ENCODE measurements at regions of chr12 and their contacts with region 1.

Region 1: GRCh38 chr12:120686690-120687577 is at the start of gene MLEC:
- DNase-seq: peak; percentile 98 to 100 (median 99)
- ATAC-seq: peak; percentile 88
- H3K4me3 ChIP-seq: peak within 1 kb of the TSS; percentile 99
- H3K4me3 Mint-ChIP-seq: peak within 1 kb of the TSS; percentile 90 to 95 (median 94)
- H3K27ac ChIP-seq: peak within 1 kb of the TSS; percentile 77
- H3K27ac Mint-ChIP-seq: peak within 1 kb of the TSS; percentile 91 to 97 (median 95)
- H3K4me1 ChIP-seq: peaks cover 12 to 22% of the 10 kb centered on the region in 2 donors
- H3K4me1 Mint-ChIP-seq: peaks cover 22 to 53% (median 41%) of the 10 kb centered on the region in 7 donors
- H3K27me3 ChIP-seq: no peaks in the 10 kb centered on the region
- H3K27me3 Mint-ChIP-seq: peaks cover 0 to 3% (median 0%) of the 10 kb centered on the region in 5 donors
- total RNA-seq, gene MLEC: 27.6 to 132 (median 57.6) TPM

Region 2: GRCh38 chr12:120116792-120117651 is 569.9 kb before region 1 on chr12:
- CTCF ChIA-PET with region 1: no interaction called
- POLR2A ChIA-PET with region 1: no interaction called
- intact Hi-C with region 1: loop called in 1 of 2 experiments (anchors 5 kb)
- DNase-seq: peak; percentile 95 to 100 (median 98)
- ATAC-seq: peak; percentile 91
- H3K4me3 ChIP-seq: peak overlapping the region; percentile 82
- H3K4me3 Mint-ChIP-seq: peak overlapping the region; percentile 78 to 95 (median 90)
- H3K27ac ChIP-seq: peak overlapping the region; percentile 84
- H3K27ac Mint-ChIP-seq: peak overlapping the region; percentile 80 to 97 (median 90)
- H3K4me1 ChIP-seq: peaks cover 46 to 48% of the 10 kb centered on the region in 2 donors
- H3K4me1 Mint-ChIP-seq: peaks cover 64 to 86% (median 80%) of the 10 kb centered on the region in 7 donors
- H3K27me3 ChIP-seq: no peaks in the 10 kb centered on the region
- H3K27me3 Mint-ChIP-seq: no peaks in the 10 kb centered on the region

Region 3: GRCh38 chr12:120469450-120470149 is 217.3 kb before region 1 on chr12 and contains the start of gene SRSF9:
- CTCF ChIA-PET with region 1: no interaction called
- POLR2A ChIA-PET with region 1: no interaction called
- intact Hi-C with region 1: loop called (anchors 1 kb)
- DNase-seq: peak; percentile 96 to 100 (median 97)
- ATAC-seq: peak; percentile 95
- H3K4me3 ChIP-seq: peak within 1 kb of the TSS; percentile 78
- H3K4me3 Mint-ChIP-seq: peak within 1 kb of the TSS; percentile 75 to 99 (median 90)
- H3K27ac ChIP-seq: peak within 1 kb of the TSS; percentile 86
- H3K27ac Mint-ChIP-seq: peak within 1 kb of the TSS; percentile 71 to 96 (median 86)
- H3K4me1 ChIP-seq: peaks cover 4 to 31% of the 10 kb centered on the region in 2 donors
- H3K4me1 Mint-ChIP-seq: peaks cover 34 to 65% (median 47%) of the 10 kb centered on the region in 7 donors
- H3K27me3 ChIP-seq: no peaks in the 10 kb centered on the region
- H3K27me3 Mint-ChIP-seq: peaks cover 0 to 2% (median 0%) of the 10 kb centered on the region in 5 donors
- total RNA-seq, gene SRSF9: 136 to 191 (median 145) TPM

Region 4: DNA sequence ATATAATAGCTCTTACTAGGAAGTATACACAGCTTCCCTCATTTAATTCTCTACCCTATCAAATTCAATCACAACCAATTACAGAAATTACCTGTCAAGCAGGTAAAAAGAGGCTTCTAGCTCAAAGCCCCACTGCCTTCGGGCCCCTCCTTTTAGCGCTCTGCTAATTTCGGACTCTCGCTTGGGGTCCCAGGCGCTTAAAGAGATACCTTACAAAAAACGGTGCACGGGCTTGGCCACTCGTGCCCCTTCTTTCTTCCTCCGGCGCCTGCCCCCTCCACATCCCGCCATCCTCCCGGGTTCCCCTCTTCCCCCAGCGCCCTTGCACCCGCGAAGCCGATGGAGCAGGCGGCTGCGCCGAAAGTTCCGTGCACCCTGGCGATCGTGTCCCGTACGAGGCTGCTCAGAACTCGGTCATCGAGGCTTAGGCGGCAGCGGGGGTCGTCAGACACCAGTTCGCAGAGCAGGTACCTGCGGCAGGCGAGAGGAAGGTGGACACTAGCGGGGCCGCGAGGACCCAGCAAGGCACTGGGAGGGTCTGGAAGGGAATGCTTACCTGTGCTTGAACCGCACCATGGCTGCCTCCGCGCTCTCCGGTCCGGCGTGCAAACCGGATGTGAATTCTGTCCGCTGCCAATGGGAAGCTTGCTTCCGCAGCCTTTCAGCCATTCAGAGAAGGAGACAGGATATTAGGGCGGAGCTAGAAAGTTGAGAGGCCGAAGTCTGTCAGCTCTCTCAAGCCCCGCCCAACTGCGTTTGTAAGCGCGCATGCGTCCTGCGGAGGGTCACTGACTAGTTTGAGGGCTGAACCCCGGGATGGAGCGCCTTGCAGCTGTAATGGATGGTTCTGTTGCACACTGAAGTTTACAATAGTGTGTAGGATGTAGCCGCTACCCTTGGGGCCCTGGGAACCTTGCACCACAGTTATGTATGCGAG is 105.9 kb before region 1 on chr12 and contains the start of gene POP5:
- CTCF ChIA-PET with region 1: no interaction called
- POLR2A ChIA-PET with region 1: interaction called, 3 read pairs
- intact Hi-C with region 1: loop called (anchors 1 kb)
- DNase-seq: peak; percentile 72 to 93 (median 89)
- ATAC-seq: peak; percentile 97
- H3K4me3 ChIP-seq: peak within 1 kb of the TSS; percentile 99
- H3K4me3 Mint-ChIP-seq: peak within 1 kb of the TSS; percentile 95 to 99 (median 98)
- H3K27ac ChIP-seq: peak within 1 kb of the TSS; percentile 77
- H3K27ac Mint-ChIP-seq: peak within 1 kb of the TSS; percentile 81 to 97 (median 94)
- H3K4me1 ChIP-seq: peaks cover 4 to 21% of the 10 kb centered on the region in 2 donors
- H3K4me1 Mint-ChIP-seq: peaks cover 24 to 47% (median 34%) of the 10 kb centered on the region in 7 donors
- H3K27me3 ChIP-seq: no peaks in the 10 kb centered on the region
- H3K27me3 Mint-ChIP-seq: peaks cover 0 to 27% (median 7%) of the 10 kb centered on the region in 5 donors
- total RNA-seq, gene POP5: 42.9 to 86.8 (median 59.0) TPM

Region 5: GRCh38 chr12:120725659-120726509 is 39.0 kb after region 1 on chr12 and contains the start of gene ACADS:
- CTCF ChIA-PET with region 1: no interaction called
- POLR2A ChIA-PET with region 1: no interaction called
- intact Hi-C with region 1: loop called (anchors 1 kb)
- DNase-seq: peak; percentile 78 to 94 (median 85)
- ATAC-seq: peak; percentile 100
- H3K4me3 ChIP-seq: peak within 1 kb of the TSS; percentile 78
- H3K4me3 Mint-ChIP-seq: peak within 1 kb of the TSS; percentile 88 to 98 (median 94)
- H3K27ac ChIP-seq: peak within 1 kb of the TSS; percentile 76
- H3K27ac Mint-ChIP-seq: peak within 1 kb of the TSS; percentile 56 to 95 (median 82)
- H3K4me1 ChIP-seq: peaks cover 12 to 13% of the 10 kb centered on the region in 2 donors
- H3K4me1 Mint-ChIP-seq: peaks cover 6 to 28% (median 23%) of the 10 kb centered on the region in 7 donors
- H3K27me3 ChIP-seq: no peaks in the 10 kb centered on the region
- H3K27me3 Mint-ChIP-seq: no peaks in the 10 kb centered on the region
- total RNA-seq, gene ACADS: 10.4 to 18.1 (median 15.7) TPM

Region 6: GRCh38 chr12:121114019-121114639 is 427.2 kb after region 1 on chr12:
- CTCF ChIA-PET with region 1: no interaction called
- POLR2A ChIA-PET with region 1: no interaction called
- intact Hi-C with region 1: no loop called
- DNase-seq: no peak
- ATAC-seq: no peak
- H3K4me3 ChIP-seq: no peak overlapping the region
- H3K4me3 Mint-ChIP-seq: no peak overlapping the region
- H3K27ac ChIP-seq: no peak overlapping the region
- H3K27ac Mint-ChIP-seq: no peak overlapping the region
- H3K4me1 ChIP-seq: no peaks in the 10 kb centered on the region
- H3K4me1 Mint-ChIP-seq: peaks cover 3 to 12% (median 5%) of the 10 kb centered on the region in 7 donors
- H3K27me3 ChIP-seq: no peaks in the 10 kb centered on the region
- H3K27me3 Mint-ChIP-seq: peaks cover 0 to 3% (median 0%) of the 10 kb centered on the region in 5 donors

Region 7: DNA sequence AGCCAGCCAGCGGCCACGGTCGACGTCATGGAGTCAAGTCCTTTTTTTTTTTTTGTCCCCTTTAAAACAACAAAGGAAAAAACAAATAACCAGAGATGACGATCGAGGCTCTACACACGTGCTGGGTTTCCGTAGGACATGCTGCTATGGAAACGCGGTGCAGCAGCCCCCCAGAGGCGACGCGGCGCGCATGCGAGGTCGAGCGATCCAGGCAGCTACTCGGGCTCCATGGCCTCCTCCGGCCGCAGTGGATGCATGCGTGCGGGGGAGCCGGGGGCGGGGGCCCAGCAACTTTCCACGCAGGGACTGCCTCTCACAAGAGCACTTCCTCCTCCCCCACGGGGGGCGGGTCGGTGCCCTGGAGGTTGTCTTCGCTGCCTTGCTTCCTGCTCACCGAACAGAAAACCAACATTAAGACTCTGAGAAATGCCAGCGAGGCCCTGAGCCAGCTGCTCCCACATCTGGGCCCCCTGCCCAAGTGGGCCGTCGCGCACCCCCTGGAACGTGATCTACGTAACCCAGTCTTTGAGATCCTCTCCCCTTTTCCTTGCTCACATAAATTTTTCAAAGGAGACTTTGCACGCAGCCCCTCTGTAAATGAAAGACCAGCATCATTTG is 553.7 kb after region 1 on chr12:
- CTCF ChIA-PET with region 1: no interaction called
- POLR2A ChIA-PET with region 1: no interaction called
- intact Hi-C with region 1: loop called in 1 of 2 experiments (anchors 2 kb)
- DNase-seq: peak; percentile 78 to 99 (median 96)
- ATAC-seq: peak; percentile 95
- H3K4me3 ChIP-seq: peak overlapping the region; percentile 71
- H3K4me3 Mint-ChIP-seq: peak overlapping the region; percentile 81 to 94 (median 88)
- H3K27ac ChIP-seq: peak overlapping the region; percentile 87
- H3K27ac Mint-ChIP-seq: peak overlapping the region; percentile 90 to 100 (median 99)
- H3K4me1 ChIP-seq: peaks cover 30 to 44% of the 10 kb centered on the region in 2 donors
- H3K4me1 Mint-ChIP-seq: peaks cover 26 to 57% (median 47%) of the 10 kb centered on the region in 7 donors
- H3K27me3 ChIP-seq: no peaks in the 10 kb centered on the region
- H3K27me3 Mint-ChIP-seq: no peaks in the 10 kb centered on the region

Region 8: DNA sequence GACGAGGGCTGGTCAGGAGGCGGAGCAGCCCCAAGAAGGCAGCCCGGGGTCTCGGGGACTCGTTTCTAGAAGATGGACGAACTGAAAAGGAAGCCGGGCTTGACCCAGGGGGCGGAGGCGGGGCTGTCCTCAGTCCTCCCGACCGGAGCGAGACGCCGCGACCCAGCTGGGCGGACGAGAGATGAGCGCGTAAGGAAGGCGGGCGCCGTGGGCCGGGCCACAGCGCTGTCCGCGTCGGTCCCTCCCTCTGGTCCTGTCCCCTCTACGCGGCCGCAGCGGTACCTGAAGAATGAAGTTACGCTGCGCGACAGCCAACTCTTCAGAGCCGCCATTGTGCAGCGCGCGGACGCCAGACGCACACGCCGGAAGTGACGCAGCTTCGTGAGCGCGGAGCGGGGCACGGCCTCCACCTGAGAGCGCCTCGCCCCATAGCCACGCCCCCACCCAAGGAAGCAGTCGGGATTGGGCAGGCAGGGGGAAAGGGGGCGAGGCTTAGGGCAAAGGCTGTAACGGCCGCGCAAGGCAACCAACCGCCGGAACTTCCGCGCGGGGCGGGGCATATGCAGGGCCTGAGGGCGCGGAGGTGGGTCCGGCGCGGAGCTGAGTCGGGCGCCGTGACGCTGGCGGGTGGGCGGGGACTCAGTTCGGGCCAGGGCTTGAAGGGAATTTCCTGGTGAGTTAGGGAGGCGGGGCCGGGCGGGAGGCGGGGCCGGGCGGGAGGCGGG is 1538.9 kb after region 1 on chr12 and contains the start of gene DIABLO:
- CTCF ChIA-PET with region 1: no interaction called
- POLR2A ChIA-PET with region 1: no interaction called
- intact Hi-C with region 1: loop called (anchors 1 to 5 kb)
- DNase-seq: peak; percentile 97 to 100 (median 100)
- ATAC-seq: peak; percentile 96
- H3K4me3 ChIP-seq: peak within 1 kb of the TSS; percentile 90
- H3K4me3 Mint-ChIP-seq: peak within 1 kb of the TSS; percentile 75 to 95 (median 90)
- H3K27ac ChIP-seq: peak within 1 kb of the TSS; percentile 99
- H3K27ac Mint-ChIP-seq: peak within 1 kb of the TSS; percentile 76 to 96 (median 93)
- H3K4me1 ChIP-seq: peaks cover 24 to 34% of the 10 kb centered on the region in 2 donors
- H3K4me1 Mint-ChIP-seq: peaks cover 23 to 53% (median 47%) of the 10 kb centered on the region in 7 donors
- H3K27me3 ChIP-seq: no peaks in the 10 kb centered on the region
- H3K27me3 Mint-ChIP-seq: no peaks in the 10 kb centered on the region
- total RNA-seq, gene DIABLO: 41.3 to 94.1 (median 50.1) TPM

Measured in naive thymus-derived CD4-positive, alpha-beta T cell (primary cell).